ENCODE measurements at regions of chr5 and their contacts with region 1.

Region 1: GRCh38 chr5:79672392-79672791 is 17.2 kb upstream of the CMYA5 start:
- DNase-seq: no peak
- ATAC-seq: no peak

Region 2: DNA sequence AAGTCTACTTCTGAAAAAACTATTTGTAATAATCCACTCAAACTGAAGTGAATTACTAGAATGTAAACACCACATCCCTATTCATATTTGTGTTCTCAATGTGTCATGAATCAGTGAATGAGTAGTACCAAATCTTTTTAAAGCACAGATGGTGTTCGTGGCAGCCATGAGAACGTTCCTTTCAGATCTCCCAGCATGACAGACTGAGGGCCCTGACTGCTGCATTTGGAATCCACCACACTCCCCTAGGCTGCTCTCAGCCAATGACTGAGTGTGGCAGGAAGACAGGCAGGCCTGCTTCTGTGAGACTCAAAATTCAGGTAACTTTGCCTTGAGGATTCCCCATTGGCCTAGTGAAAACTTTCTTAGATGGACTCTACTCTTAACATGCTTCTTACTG is 447.4 kb before region 1 on chr5:
- intact Hi-C with region 1: no loop called
- DNase-seq: no peak
- ATAC-seq: no peak

Region 3: GRCh38 chr5:79621042-79621441 is 51.4 kb before region 1 on chr5:
- intact Hi-C with region 1: loop called in 1 of 2 experiments (anchors 10 kb)
- DNase-seq: no peak
- ATAC-seq: peak in 1 of 2 donors; percentile 50

Region 4: GRCh38 chr5:79728396-79728795 is 56.0 kb after region 1 on chr5:
- intact Hi-C with region 1: no loop called
- DNase-seq: no peak
- ATAC-seq: peak; percentile 14 to 73

Measured in left cardiac atrium (tissue), 4 donors.